ENCODE measurements at regions of chrX and their contacts with region 1.

Region 1: GRCh38 chrX:15789979-15790768 is at the start of gene ZRSR2:
- DNase-seq: peak; percentile 92
- ATAC-seq: peak; percentile 91
- H3K4me3 Mint-ChIP-seq: no peak within 1 kb of the TSS
- H3K27ac Mint-ChIP-seq: no peak within 1 kb of the TSS
- H3K4me1 Mint-ChIP-seq: peaks cover 18% of the 10 kb centered on the region
- H3K27me3 Mint-ChIP-seq: no peaks in the 10 kb centered on the region
- total RNA-seq, gene ZRSR2: 12.4 TPM

Region 2: DNA sequence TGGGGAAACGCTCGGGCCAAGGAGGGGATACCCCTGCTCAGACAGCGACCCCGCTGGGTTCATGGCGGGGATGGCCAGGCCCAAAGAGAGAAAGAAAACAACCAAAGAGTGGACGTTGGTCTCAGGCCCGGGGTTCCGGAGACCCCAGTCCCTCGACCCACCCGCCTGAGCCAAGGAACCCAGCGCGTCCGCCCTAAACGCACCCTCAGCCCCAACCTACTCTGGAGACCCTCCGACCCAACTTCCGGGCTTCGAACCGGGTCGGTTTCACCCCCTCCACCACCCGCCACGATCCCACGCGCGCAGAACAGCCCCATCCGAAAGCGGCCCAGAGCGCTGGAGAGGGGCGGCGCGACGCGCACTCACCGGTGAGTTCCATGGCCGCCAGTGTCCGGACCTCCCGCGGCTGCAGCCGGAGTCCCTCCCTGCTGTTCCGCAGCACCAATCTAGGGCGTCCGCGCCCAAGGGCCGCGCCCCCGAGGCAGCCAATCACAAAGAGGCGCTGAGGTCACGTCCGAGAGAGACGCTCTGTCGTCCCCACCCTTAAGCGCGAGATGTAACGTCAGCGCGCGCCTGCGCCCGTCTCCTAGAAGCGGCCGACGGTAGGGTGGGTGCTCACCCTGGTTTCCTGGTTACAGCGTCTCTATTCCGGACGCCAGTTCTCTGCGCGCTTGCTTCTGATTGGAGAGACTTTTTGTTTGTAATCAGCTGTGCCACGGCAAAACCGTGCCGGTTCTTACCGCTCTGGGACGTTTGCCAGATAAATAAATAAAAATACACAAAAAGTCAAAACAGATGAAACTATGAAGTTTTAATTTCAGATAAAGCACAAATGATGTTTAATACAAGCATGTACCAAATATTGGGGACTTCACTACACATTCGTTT is 454.8 kb before region 1 on chrX and contains the start of gene PIGA:
- CTCF ChIA-PET with region 1: no interaction called
- POLR2A ChIA-PET with region 1: no interaction called
- intact Hi-C with region 1: loop called in 1 of 2 experiments (anchors 1 kb)
- DNase-seq: peak; percentile 94
- ATAC-seq: peak; percentile 97
- H3K4me3 Mint-ChIP-seq: peak within 1 kb of the TSS; percentile 84
- H3K27ac Mint-ChIP-seq: peak within 1 kb of the TSS; percentile 91
- H3K4me1 Mint-ChIP-seq: peaks cover 14% of the 10 kb centered on the region
- H3K27me3 Mint-ChIP-seq: peaks cover 4% of the 10 kb centered on the region
- total RNA-seq, gene PIGA: 37.2 to 37.9 TPM

Region 3: DNA sequence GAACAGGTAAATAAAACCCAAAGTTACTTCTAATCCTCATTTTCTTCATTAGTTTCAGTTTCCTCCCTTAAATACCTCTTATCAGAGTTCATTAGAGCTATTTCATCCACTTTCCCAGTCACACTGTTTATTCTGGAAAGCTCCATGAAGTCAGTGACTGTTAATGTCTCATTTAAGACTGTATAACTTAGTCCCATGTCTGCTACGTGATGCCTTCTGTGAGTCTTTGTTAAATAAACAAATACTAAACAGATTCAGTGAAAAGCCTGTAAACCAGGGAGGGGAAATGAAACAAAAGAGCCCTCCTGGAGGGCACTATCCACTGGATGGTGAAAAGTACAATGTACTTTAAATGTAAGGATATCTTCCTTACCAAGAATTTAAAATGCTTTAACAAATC is 214.2 kb before region 1 on chrX:
- CTCF ChIA-PET with region 1: no interaction called
- POLR2A ChIA-PET with region 1: no interaction called
- intact Hi-C with region 1: no loop called
- DNase-seq: no peak
- ATAC-seq: no peak
- H3K4me3 Mint-ChIP-seq: no peak overlapping the region
- H3K27ac Mint-ChIP-seq: no peak overlapping the region
- H3K4me1 Mint-ChIP-seq: no peaks in the 10 kb centered on the region
- H3K27me3 Mint-ChIP-seq: peaks cover 14% of the 10 kb centered on the region

Region 4: GRCh38 chrX:15737960-15738902 is 51.9 kb before region 1 on chrX and contains the start of gene CA5B:
- CTCF ChIA-PET with region 1: no interaction called
- POLR2A ChIA-PET with region 1: interaction called, 7 read pairs
- intact Hi-C with region 1: loop called (anchors 1 kb)
- DNase-seq: peak; percentile 97
- ATAC-seq: peak; percentile 94
- H3K4me3 Mint-ChIP-seq: peak within 1 kb of the TSS; percentile 82
- H3K27ac Mint-ChIP-seq: peak within 1 kb of the TSS; percentile 78
- H3K4me1 Mint-ChIP-seq: peaks cover 40% of the 10 kb centered on the region
- H3K27me3 Mint-ChIP-seq: no peaks in the 10 kb centered on the region
- total RNA-seq, gene CA5B: 13.3 to 17.7 TPM

Region 5: DNA sequence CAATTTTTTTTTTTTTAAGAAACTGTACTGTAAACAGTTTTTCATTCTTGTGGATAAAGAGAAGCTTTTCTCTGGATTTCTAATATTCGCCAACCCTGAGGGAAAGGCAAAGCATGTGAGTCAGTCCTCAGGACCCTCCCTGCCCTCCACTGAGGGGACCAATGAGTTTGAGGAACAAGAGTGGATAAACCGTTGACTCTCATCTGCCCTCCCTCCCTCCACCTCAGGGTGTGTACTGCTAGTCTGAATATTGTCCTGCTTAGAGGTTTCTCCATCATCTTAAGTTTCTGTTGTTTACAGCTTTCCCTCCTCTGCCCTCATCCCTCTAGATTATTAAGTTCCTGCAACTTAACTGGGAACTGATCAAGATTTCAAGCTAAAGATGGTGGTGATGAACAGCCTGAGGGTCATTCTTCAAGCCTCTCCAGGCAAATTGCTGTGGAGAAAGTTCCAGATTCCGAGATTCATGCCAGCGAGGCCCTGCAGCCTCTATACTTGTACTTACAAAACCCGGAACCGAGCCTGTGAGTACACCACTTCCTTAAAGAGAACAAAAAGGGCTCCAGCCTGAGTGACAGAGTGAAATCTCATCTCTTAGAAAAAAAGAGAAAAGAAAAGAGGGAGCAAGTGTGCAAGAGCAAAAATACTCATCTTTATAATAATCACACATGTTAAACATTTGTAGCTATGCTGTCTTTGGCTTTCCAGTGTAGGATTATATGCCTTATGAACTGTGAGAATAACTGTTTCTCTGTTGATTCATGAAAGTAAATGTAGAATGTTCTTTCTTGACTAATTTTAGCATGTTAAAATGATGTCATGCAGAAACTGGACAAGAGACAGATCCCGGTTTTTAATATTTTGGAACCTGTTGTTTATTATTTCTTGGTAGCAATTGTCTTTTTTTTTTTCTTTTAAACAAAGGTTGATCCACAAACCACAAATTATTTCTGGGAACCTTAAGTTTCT is 40.2 kb before region 1 on chrX:
- CTCF ChIA-PET with region 1: no interaction called
- POLR2A ChIA-PET with region 1: no interaction called
- intact Hi-C with region 1: loop called in 1 of 2 experiments (anchors 5 kb)
- DNase-seq: peak; percentile 31
- ATAC-seq: peak; percentile 72
- H3K4me3 Mint-ChIP-seq: peak overlapping the region; percentile 49
- H3K27ac Mint-ChIP-seq: peak overlapping the region; percentile 90
- H3K4me1 Mint-ChIP-seq: peaks cover 72% of the 10 kb centered on the region
- H3K27me3 Mint-ChIP-seq: no peaks in the 10 kb centered on the region

Region 6: DNA sequence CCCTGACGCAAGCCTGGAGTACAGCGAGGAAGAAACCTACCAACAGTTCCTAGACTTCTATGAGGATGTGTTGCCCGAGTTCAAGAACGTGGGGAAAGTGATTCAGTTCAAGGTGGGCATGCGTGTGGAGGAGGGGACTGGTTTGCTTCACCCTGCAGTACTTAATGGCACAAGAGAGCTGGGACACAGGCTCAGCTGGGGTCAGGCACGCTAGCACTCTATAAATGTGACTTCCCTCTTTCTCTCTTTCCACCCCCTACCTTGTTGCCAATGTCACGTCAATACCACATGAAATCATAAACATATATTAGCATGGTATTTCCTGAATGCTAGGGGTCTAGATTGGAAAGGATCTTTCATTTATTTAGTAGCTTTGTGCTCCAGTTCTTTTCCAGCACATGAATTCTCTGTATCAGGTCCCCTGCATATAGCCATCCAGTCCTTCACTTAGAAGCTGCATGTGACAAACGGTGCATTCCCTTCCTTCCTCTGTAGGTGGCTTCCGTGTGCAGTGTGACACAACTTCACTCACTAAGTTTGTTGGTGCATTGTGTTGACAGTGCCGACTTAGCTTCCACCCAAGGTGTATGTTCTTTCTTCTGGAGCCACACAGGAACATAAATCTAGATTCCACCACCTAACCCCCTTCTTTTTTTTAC is 25.7 kb after region 1 on chrX:
- CTCF ChIA-PET with region 1: no interaction called
- POLR2A ChIA-PET with region 1: no interaction called
- intact Hi-C with region 1: loop called in 1 of 2 experiments (anchors 2 kb)
- DNase-seq: peak; percentile 34
- ATAC-seq: peak; percentile 79
- H3K4me3 Mint-ChIP-seq: no peak overlapping the region
- H3K27ac Mint-ChIP-seq: no peak overlapping the region
- H3K4me1 Mint-ChIP-seq: peaks cover 40% of the 10 kb centered on the region
- H3K27me3 Mint-ChIP-seq: no peaks in the 10 kb centered on the region

Region 7: GRCh38 chrX:16148896-16149295 is 358.7 kb after region 1 on chrX:
- CTCF ChIA-PET with region 1: no interaction called
- POLR2A ChIA-PET with region 1: no interaction called
- intact Hi-C with region 1: no loop called
- DNase-seq: no peak
- ATAC-seq: no peak
- H3K4me3 Mint-ChIP-seq: no peak overlapping the region
- H3K27ac Mint-ChIP-seq: no peak overlapping the region
- H3K4me1 Mint-ChIP-seq: no peaks in the 10 kb centered on the region
- H3K27me3 Mint-ChIP-seq: peaks cover 6% of the 10 kb centered on the region

Region 8: DNA sequence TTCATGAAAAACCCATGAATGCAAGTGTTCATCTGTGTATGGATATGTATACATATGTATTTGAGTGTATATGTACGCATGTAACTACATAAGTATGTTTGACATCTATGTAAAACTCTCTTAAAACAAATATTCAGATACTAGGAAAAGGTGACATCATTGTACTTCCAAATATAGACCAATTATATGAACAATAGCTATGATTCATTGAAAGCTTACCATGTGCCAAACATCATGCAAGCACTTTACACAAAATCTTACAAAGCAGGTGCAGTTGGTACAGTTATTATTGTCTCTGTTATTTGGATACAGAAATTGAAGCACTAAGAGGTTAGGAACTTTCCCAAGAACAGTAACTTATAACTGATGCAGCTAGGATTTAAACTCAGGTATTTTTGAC is 398.5 kb after region 1 on chrX:
- CTCF ChIA-PET with region 1: no interaction called
- POLR2A ChIA-PET with region 1: no interaction called
- intact Hi-C with region 1: no loop called
- DNase-seq: no peak
- ATAC-seq: no peak
- H3K4me3 Mint-ChIP-seq: no peak overlapping the region
- H3K27ac Mint-ChIP-seq: no peak overlapping the region
- H3K4me1 Mint-ChIP-seq: peaks cover 4% of the 10 kb centered on the region
- H3K27me3 Mint-ChIP-seq: peaks cover 2% of the 10 kb centered on the region

Region 9: GRCh38 chrX:16376056-16376455 is 585.9 kb after region 1 on chrX:
- CTCF ChIA-PET with region 1: no interaction called
- POLR2A ChIA-PET with region 1: no interaction called
- intact Hi-C with region 1: no loop called
- DNase-seq: no peak
- ATAC-seq: no peak
- H3K4me3 Mint-ChIP-seq: no peak overlapping the region
- H3K27ac Mint-ChIP-seq: no peak overlapping the region
- H3K4me1 Mint-ChIP-seq: no peaks in the 10 kb centered on the region
- H3K27me3 Mint-ChIP-seq: peaks cover 4% of the 10 kb centered on the region

Region 10: DNA sequence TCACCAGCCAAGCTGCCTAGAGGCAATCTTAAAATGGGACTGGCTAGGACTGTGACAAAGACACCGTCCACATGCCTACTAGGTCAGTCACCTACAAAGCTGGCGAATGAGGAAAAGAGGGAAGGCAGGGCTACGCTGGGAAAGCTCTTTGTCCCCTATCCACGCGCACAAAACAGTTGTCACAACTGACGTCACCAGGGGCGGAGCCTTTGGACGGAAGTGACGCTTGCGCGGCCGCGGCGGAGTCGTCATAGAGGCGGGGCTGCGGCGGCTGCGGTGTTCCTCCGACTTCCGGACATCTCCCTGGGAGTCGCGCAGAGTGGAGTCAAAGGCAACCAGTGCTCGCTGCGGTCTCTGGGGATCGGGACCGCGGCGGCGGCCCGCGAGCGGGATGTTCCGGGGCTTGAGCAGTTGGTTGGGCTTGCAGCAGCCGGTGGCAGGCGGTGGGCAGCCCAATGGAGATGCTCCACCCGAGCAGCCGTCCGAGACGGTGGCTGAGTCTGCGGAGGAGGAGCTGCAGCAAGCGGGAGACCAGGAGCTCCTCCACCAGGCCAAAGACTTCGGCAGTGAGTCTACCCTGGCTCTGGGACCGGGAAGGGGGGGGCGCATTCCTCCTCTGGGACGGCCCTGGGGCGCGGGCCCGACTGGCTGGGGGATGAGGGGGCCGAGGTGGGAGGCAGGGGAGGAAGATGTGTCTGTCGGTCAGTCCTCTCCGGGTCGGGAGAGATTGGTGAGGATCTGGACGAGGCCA is 929.3 kb after region 1 on chrX and contains the start of gene SYAP1:
- CTCF ChIA-PET with region 1: no interaction called
- POLR2A ChIA-PET with region 1: no interaction called
- intact Hi-C with region 1: loop called in 1 of 2 experiments (anchors 1 kb)
- DNase-seq: peak; percentile 94
- ATAC-seq: peak; percentile 96
- H3K4me3 Mint-ChIP-seq: peak within 1 kb of the TSS; percentile 74
- H3K27ac Mint-ChIP-seq: peak within 1 kb of the TSS; percentile 88
- H3K4me1 Mint-ChIP-seq: peaks cover 22% of the 10 kb centered on the region
- H3K27me3 Mint-ChIP-seq: no peaks in the 10 kb centered on the region
- total RNA-seq, gene SYAP1: 22.8 to 31.4 TPM